Sciatic nerve (tissue), 2 donors: ENCODE measurements at regions of chr3 and their contacts with region 1.

Region 1: GRCh38 chr3:161150001-161150525 is 44.9 kb upstream of the B3GALNT1 start:
- DNase-seq: no peak
- ATAC-seq: no peak

Region 2: GRCh38 chr3:161163297-161163696 is 13.2 kb after region 1 on chr3:
- intact Hi-C with region 1: loop called (anchors 2 kb)
- DNase-seq: no peak
- ATAC-seq: no peak

Region 3: DNA sequence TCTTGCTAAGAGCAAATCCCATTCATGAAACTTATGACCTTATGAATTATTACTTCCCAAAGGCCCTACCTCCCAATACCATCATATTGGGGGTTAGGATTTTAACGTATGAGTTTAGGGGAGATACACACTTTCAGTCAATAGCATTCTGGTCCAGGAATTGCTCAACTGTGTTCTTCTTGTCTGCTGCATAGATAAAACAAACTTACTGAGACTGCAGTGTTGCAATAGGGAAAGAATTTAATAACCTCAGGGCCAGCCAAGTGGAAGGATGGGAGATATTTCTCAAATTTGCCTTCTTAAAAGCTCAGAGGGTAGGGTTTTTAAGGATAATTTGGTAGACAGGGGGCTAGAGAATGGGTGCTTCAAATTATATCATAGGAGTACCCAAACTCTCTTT is 972.3 kb after region 1 on chr3:
- intact Hi-C with region 1: no loop called
- DNase-seq: no peak
- ATAC-seq: peak; percentile 84